ENCODE measurements at regions of chr11 and their contacts with region 1.

Region 1: GRCh38 chr11:110296226-110297075 is at the start of gene RDX:
- DNase-seq: peak; percentile 88
- ATAC-seq: peak; percentile 72
- H3K4me3 ChIP-seq: peak within 1 kb of the TSS; percentile 97
- H3K27ac ChIP-seq: peak within 1 kb of the TSS; percentile 91
- H3K4me1 ChIP-seq: peaks cover 48% of the 10 kb centered on the region
- H3K27me3 ChIP-seq: no peaks in the 10 kb centered on the region
- CTCF ChIP-seq: no peak
- total RNA-seq, gene RDX: 86.2 and 131 TPM in 2 replicates

Region 2: DNA sequence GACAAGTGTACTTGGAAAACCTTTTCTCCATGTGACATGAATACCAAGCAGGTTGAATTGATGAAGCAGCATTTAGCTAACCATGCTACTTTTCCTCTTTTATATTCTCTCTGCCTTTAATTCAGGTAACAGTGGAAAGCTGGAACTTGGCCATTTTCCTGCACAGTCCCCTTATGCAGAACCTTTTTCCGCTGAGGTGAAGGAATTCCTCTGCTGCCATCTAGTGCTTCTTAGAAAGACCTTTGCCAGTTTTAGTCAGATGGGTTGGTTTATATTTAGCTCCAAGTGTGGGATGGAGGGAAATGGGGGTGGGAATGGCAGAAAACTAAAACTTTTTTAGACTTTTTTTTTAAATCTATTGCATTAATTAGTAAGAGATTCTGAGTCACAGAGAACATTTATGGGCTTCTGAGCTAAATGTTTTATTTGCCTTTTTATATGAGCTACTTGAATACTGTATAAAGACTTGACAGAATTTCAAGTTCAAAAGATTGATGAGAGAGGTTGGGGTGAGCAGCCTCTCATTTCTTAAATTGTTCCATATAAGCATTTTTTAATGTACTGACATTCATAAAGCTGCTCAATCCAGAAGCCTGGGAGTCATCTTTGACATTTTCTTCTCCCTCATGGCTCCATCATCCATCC is 357.2 kb before region 1 on chr11:
- CTCF ChIA-PET with region 1: interaction called, 5 read pairs
- POLR2A ChIA-PET with region 1: interaction called, 3 read pairs
- intact Hi-C with region 1: loop called (anchors 5 kb)
- DNase-seq: peak; percentile 94
- ATAC-seq: peak; percentile 68
- H3K4me3 ChIP-seq: no peak overlapping the region
- H3K27ac ChIP-seq: peak overlapping the region; percentile 85
- H3K4me1 ChIP-seq: peaks cover 22% of the 10 kb centered on the region
- H3K27me3 ChIP-seq: no peaks in the 10 kb centered on the region
- CTCF ChIP-seq: peak; percentile 97

Region 3: DNA sequence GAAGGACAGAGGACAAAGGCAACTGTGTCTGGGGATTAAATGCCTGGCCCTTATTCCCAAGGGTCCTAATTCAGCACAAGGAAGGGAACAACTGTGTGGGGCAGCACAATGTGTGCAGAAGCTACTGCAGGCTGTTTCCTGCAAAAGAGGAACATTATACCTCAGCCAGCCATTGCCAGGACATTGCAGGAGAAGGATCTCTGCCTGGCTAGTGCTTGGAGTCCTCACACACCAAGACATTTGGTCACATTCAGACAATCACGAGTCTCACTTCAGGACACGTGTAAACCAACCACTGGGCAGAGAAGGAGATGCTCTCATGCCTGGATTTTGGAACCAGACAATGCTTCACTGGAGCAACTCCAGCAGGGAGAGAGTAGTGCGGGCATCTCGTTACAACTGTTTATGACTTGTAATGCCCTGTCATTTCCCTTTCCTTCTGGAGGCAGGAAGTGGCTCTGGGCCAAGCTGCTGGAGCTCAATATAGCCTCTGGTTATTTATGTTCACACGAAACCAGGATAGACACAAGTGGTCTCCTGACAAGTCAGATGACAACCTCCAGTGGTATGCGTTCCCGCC is 227.2 kb before region 1 on chr11:
- CTCF ChIA-PET with region 1: interaction called, 11 read pairs
- POLR2A ChIA-PET with region 1: no interaction called
- intact Hi-C with region 1: no loop called
- DNase-seq: peak; percentile 100
- ATAC-seq: peak; percentile 88
- H3K4me3 ChIP-seq: no peak overlapping the region
- H3K27ac ChIP-seq: peak overlapping the region; percentile 93
- H3K4me1 ChIP-seq: peaks cover 53% of the 10 kb centered on the region
- H3K27me3 ChIP-seq: no peaks in the 10 kb centered on the region
- CTCF ChIP-seq: no peak

Region 4: DNA sequence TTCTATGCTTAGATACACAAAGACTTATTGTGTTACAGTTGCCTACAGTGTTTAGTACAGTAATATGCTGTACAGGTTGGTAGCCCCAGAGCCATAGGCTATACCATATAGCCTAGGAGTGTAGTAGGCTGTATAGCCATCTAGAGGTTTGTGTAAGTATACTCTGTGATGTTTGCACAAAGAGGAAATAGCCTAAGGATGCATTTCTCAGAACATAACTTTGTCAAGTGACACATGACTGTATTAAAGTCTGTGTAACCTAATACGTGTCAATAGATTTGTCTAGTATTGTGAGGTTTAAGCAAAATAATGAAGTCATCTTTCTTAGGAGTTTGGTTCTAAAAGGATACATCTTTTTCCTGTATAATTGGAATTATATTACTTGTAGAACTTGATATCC is 197.8 kb before region 1 on chr11:
- CTCF ChIA-PET with region 1: no interaction called
- POLR2A ChIA-PET with region 1: no interaction called
- intact Hi-C with region 1: loop called (anchors 5 kb)
- DNase-seq: peak; percentile 85
- ATAC-seq: peak; percentile 72
- H3K4me3 ChIP-seq: no peak overlapping the region
- H3K27ac ChIP-seq: peak overlapping the region; percentile 32
- H3K4me1 ChIP-seq: peaks cover 52% of the 10 kb centered on the region
- H3K27me3 ChIP-seq: no peaks in the 10 kb centered on the region
- CTCF ChIP-seq: peak; percentile 51

Region 5: DNA sequence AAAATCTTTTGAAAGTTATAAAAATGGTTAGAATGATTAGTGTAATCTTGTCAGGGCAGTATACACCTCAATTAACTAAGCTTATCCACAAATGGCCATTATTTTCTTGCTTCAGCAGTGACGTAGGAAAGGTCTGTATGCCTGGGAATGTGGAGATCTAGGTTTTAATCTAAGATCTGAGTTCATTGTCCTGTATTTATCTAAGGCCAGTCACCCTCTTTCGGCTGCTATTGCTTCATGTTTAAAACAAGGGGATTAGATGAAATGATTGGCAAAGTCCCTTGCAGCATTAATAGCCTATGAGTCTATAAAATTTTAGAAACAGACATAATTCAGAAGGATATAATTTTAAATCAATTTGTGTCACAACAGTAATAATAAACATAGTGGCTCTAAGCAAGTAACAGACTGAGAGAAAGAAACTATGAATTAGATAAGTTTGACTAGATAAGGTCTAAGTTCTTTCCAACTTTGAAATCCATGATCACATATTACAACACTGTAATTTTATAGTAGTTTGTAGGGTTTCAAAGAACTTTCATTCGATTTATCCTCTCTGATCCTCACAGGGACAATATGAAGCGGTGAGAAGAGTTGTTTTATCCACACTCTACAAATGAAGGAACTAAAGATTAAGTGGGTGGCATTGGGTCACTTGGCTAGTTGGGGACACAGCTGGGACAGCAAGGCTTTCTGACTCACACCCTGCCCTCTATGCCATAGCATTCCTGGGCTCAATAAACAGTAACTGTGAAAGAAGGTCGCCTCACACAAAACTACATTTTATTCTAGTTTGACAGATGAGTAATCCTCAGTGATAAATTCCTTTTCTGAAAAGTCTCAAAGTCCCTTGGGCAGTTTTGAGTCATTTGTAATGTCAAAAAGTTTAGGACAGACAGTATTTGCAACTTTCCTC is 60.6 kb after region 1 on chr11:
- CTCF ChIA-PET with region 1: interaction called, 3 read pairs
- POLR2A ChIA-PET with region 1: no interaction called
- intact Hi-C with region 1: loop called (anchors 2 kb)
- DNase-seq: peak; percentile 97
- ATAC-seq: peak; percentile 97
- H3K4me3 ChIP-seq: peak overlapping the region; percentile 16; the same call in 1 of the 2 replicates
- H3K27ac ChIP-seq: peak overlapping the region; percentile 94
- H3K4me1 ChIP-seq: peaks cover 23% of the 10 kb centered on the region
- H3K27me3 ChIP-seq: no peaks in the 10 kb centered on the region
- CTCF ChIP-seq: no peak

Region 6: GRCh38 chr11:110447897-110448745 is 151.7 kb after region 1 on chr11:
- CTCF ChIA-PET with region 1: no interaction called
- POLR2A ChIA-PET with region 1: no interaction called
- intact Hi-C with region 1: loop called (anchors 5 kb)
- DNase-seq: peak; percentile 88
- ATAC-seq: peak; percentile 49; the same call in 1 of the 2 replicates
- H3K4me3 ChIP-seq: no peak overlapping the region
- H3K27ac ChIP-seq: peak overlapping the region; percentile 79
- H3K4me1 ChIP-seq: peaks cover 21% of the 10 kb centered on the region
- H3K27me3 ChIP-seq: no peaks in the 10 kb centered on the region
- CTCF ChIP-seq: peak; percentile 90

Measured in PC-3 (cell line).